ENCODE measurements at regions of chr11 and their contacts with region 1.

Region 1: GRCh38 chr11:8318336-8318935 is 54.8 kb upstream of the LMO1 start:
- DNase-seq: no peak
- H3K4me3 ChIP-seq: no peak overlapping the region
- H3K27ac ChIP-seq: no peak overlapping the region
- H3K4me1 ChIP-seq: peaks cover 0 to 13% of the 10 kb centered on the region in 2 experiments; a peak in 2 of 4 replicates
- H3K27me3 ChIP-seq: 0 out of 2 replicates have a peak, but pooled peaks cover 4% of the 10 kb centered on the region
- CTCF ChIP-seq: no peak; the same call in 1 of the 2 replicates
- EP300 ChIP-seq: no peak
- RAD21 ChIP-seq: peak; percentile 43

Region 2: GRCh38 chr11:8328848-8329330 is 10.5 kb after region 1 on chr11:
- CTCF ChIA-PET with region 1: interaction called, 40 read pairs
- POLR2A ChIA-PET with region 1: no interaction called
- DNase-seq: peak; percentile 89
- H3K4me3 ChIP-seq: peak overlapping the region in 1 of 2 experiments; percentile 45; a peak in 3 of 4 replicates
- H3K27ac ChIP-seq: peak overlapping the region in 1 of 2 experiments; percentile 28; a peak in 1 of 4 replicates
- H3K4me1 ChIP-seq: peaks cover 6 to 23% of the 10 kb centered on the region in 2 experiments; a peak in 2 of 4 replicates
- H3K27me3 ChIP-seq: no peaks in the 10 kb centered on the region
- CTCF ChIP-seq: peak; percentile 88
- EP300 ChIP-seq: no peak
- RAD21 ChIP-seq: peak; percentile 60

Region 3: GRCh38 chr11:8777907-8778767 is 459.7 kb after region 1 on chr11:
- CTCF ChIA-PET with region 1: no interaction called
- POLR2A ChIA-PET with region 1: no interaction called
- DNase-seq: no peak
- H3K4me3 ChIP-seq: no peak overlapping the region
- H3K27ac ChIP-seq: no peak overlapping the region; a peak in 1 of 4 replicates
- H3K4me1 ChIP-seq: peaks cover 5 to 8% of the 10 kb centered on the region in 2 experiments; a peak in 3 of 4 replicates
- H3K27me3 ChIP-seq: no peaks in the 10 kb centered on the region
- CTCF ChIP-seq: no peak
- EP300 ChIP-seq: no peak
- RAD21 ChIP-seq: no peak